ENCODE measurements at regions of chr3 and their contacts with region 1.

Region 1: DNA sequence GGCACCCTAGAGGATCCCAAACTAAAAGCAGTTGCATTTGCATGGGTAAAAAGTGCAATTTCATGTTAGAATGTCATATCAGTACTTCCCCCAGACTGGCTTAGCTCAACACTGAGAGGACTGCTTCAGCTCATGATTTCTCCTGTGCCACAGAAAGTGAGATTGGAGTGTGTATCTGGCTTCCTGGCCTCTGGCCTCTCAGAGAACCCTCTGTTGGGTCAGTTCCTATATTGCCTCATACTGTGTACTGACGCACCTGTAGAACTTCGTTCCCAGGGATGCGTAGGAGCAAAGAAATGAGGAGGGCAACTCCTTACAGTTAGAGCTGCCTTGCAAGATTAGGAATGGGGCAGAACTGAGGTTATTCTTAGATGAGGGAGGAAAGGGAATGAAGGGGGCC is 340.8 kb downstream of the TIGIT start:
- DNase-seq: no peak

Region 2: GRCh38 chr3:114660124-114660523 is 25.5 kb after region 1 on chr3:
- intact Hi-C with region 1: loop called in 1 of 2 experiments (anchors 1 kb)
- DNase-seq: no peak

Region 3: DNA sequence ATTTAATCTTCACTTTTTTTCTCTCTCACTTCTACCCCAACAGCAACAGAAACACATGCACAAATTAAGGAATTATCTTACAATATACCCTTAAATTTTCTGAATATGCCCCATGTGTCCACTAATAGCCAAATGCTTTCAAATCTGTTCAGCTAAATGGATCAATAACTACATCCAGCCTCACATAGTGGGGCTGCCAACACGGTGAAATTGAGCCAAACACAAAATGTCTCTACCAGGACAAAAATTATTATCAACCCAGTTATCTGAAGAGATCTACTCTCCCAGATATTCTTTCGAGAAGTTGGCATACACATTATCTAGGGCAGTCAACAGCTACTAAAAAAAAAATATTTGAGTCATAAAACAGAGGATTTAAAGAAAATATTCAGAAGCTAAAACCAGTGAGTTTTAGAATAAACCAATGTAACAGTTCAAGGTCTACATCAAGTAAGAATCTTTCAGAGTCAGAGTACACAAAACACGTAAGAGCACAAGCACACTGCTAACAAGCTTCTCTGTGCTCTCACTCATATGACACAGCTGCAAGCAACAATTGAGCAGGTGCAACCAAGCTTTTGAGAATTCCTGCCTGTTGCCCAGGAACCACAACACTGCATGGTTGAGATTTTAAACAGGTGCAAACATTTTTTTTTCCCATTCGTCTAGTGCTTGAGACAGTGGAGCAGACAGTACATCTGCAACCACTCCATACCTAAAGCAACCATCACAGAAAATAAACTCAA is 264.7 kb after region 1 on chr3:
- intact Hi-C with region 1: no loop called
- DNase-seq: no peak

Measured in posterior vena cava (tissue), 2 donors.